ENCODE measurements at regions of chr6 and their contacts with region 1.

Region 1: GRCh38 chr6:111210194-111210728 is 123.0 kb downstream of the SLC16A10 start:
- DNase-seq: no peak

Region 2: DNA sequence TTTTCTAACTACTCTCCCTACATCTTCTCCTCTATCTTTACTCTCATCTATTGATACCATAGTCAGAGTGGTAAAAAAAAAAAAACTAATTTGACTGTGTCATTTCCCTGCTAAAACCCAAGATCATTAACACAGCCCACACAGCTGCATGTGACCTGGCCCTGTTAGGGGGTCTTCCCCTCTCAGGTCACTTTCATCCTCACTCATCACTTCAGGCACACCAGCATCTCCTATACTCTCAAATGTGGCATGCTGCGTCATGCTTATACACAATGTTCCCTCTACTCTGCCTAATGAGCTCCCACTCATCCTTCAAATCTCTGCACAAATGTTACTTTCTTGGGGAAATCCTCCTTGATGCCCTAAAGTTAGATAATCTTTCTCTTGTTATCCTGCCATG is 481.8 kb before region 1 on chr6:
- intact Hi-C with region 1: no loop called
- DNase-seq: peak in 1 of 10 donors; percentile 9

Region 3: DNA sequence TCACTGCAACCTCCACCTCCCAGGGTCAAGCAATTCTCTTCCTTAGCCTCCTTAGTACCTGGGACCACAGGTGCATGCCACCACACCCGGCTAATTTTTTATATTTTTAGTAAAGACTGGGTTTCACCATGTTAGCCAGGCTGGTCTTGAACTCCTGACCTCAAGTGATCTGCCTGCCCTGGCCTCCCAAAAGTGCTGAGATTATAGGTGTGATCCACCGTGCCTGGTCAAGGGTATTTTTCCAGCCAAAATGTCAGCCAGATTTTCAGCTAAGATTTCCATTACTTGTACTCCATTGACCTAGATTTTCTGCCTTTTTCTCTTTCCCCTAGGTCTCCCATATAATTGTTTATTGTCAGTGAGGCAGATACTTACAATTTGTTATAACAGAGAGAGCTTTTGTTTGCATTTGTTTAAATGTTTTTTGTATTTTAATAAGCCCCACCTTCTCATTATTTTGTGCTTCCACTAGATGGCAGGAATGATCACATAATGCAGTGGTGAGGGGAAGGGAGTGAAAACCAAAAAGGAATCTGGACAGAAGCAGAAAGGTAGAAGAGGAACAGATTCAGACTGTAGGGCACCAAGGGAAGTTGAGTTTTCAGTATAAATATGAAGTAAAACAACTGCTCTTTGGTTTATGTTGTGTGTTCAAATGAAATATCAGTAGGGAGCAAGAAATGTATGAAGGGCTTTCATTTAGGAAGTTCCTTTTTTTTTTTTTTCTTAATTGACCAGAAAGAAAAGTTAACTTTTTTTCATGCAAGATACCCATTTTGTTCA is 198.7 kb before region 1 on chr6:
- intact Hi-C with region 1: loop called (anchors 2 kb)
- DNase-seq: no peak

Measured in posterior cingulate gyrus (tissue), 11 donors.